ENCODE measurements at regions of chr3 and their contacts with region 1.

Region 1: GRCh38 chr3:181999314-181999713 is 287.6 kb downstream of the SOX2 start:
- DNase-seq: no peak
- H3K4me3 ChIP-seq: no peak overlapping the region
- H3K27ac ChIP-seq: no peak overlapping the region
- H3K4me1 ChIP-seq: no peaks in the 10 kb centered on the region
- H3K27me3 ChIP-seq: no peaks in the 10 kb centered on the region
- CTCF ChIP-seq: no peak
- POLR2A ChIP-seq: no peak

Region 2: DNA sequence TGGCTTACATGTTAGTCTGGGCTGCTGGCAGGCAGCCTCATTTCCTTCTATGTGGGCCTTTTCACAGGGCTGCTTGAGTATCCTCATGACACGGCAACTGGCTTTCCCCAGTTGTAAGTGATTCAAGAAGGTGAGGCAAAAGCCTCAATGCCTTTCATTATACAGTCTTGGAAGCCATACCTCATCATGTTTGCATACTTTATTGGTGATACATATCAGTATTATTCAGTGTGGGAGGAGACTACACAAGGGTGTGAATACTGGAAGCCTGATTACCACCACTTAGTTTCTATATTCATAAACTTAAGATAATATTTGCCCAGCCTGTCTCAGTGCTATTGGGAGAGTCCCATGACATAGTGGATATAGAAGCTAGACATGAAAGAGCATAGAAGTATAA is 59.2 kb after region 1 on chr3:
- CTCF ChIA-PET with region 1: no interaction called
- POLR2A ChIA-PET with region 1: no interaction called
- dilution Hi-C with region 1: no loop called
- intact Hi-C with region 1: loop called (anchors 2 kb)
- DNase-seq: no peak
- H3K4me3 ChIP-seq: no peak overlapping the region
- H3K27ac ChIP-seq: no peak overlapping the region
- H3K4me1 ChIP-seq: no peaks in the 10 kb centered on the region
- H3K27me3 ChIP-seq: no peaks in the 10 kb centered on the region
- CTCF ChIP-seq: no peak
- POLR2A ChIP-seq: no peak

Region 3: DNA sequence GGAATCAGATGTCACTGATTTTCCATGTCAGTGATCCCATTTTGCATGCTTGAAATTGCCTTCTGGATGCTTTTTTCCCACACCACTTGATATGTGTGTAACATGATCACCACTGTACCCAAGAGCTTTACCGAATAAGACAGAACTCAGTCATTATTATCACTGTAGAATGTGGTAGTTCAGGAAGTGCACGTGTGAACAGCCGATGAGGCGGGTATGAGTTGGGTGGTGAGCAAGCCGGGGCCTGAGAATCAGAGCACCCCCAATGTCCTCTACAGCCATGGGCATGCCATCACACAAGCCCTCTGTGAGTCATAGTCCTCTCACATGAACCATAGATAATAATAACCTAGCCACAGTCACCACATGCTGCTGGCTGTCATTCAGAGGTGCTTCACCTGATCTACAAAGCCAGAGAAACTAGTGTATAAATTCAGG is 183.2 kb after region 1 on chr3:
- CTCF ChIA-PET with region 1: no interaction called
- POLR2A ChIA-PET with region 1: no interaction called
- dilution Hi-C with region 1: no loop called
- intact Hi-C with region 1: no loop called
- DNase-seq: no peak
- H3K4me3 ChIP-seq: no peak overlapping the region
- H3K27ac ChIP-seq: no peak overlapping the region
- H3K4me1 ChIP-seq: no peaks in the 10 kb centered on the region
- H3K27me3 ChIP-seq: no peaks in the 10 kb centered on the region
- CTCF ChIP-seq: no peak
- POLR2A ChIP-seq: no peak

Measured in endothelial cell of umbilical vein (primary cell).